ENCODE measurements at regions of chr4 and their contacts with region 1.

Region 1: GRCh38 chr4:27010334-27010940 is 149.8 kb downstream of the STIM2 start:
- DNase-seq: peak; percentile 77
- H3K4me3 ChIP-seq: no peak overlapping the region
- H3K27ac ChIP-seq: no peak overlapping the region
- H3K4me1 ChIP-seq: peaks cover 10% of the 10 kb centered on the region
- H3K27me3 ChIP-seq: no peaks in the 10 kb centered on the region
- CTCF ChIP-seq: peak; percentile 62 to 68
- POLR2A ChIP-seq: no peak

Region 2: DNA sequence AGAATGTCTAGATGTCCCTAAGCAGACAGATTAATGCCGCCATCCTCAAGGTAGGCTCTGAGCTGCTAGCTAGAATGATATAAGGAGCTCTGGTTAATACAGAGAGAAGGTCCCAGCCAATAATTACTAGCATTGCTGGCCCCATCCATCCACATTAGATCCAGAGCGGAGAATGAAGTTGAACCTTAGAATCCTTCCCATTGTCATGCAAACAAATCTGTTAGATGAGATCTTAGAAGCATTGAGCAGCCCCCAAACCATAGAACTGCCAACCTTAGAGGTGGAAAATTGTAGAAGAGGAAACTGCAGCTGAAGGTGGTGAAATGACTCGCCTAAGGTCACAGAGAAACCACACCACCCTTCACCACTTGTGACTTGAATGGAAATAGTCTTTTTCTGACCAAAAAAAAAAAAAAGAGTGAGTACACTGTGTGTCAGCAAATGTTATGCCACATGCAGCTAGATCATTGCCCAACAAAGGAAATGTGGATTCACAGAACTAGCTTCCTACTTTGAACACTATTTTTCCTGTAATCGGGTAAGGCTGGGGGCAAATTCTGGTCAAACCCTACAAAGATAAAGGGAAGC is 934.3 kb before region 1 on chr4:
- CTCF ChIA-PET with region 1: no interaction called
- POLR2A ChIA-PET with region 1: no interaction called
- dilution Hi-C with region 1: no loop called
- intact Hi-C with region 1: loop called (anchors 5 kb)
- DNase-seq: no peak
- H3K4me3 ChIP-seq: no peak overlapping the region
- H3K27ac ChIP-seq: no peak overlapping the region
- H3K4me1 ChIP-seq: no peaks in the 10 kb centered on the region
- H3K27me3 ChIP-seq: no peaks in the 10 kb centered on the region
- CTCF ChIP-seq: no peak
- POLR2A ChIP-seq: no peak

Region 3: DNA sequence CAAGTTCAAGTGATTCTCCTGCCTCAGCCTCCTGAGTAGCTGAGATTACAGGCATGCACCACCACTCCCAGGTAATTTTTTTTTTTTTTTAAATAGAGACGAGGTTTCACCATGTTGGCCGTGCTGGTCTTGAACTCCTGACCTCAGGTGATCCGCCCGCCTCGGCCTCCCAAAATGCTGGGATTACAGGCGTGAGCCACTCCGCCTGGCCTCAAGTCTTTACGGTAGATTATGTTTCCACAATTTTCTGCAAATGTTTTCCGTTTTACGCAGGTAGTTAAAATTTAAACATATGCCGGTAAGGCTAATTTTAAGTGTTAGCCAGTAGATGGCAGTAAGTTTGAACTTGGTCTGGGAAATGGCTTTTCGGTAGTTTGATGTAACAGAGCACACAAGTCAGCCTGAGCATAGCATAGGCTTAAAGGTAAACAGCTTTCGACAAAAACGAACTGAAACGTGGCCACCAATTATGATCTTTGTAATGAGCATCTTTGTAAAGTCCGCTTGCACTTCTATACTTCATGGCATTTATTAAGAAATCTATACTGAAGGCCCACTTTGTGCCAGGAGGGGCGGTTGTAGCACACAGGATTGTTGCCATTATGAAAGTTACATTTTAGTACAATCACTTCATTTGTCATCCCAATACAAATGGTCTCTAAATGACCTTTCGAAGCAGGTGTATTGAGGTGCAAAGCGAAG is 551.2 kb before region 1 on chr4:
- CTCF ChIA-PET with region 1: interaction called, 21 read pairs
- POLR2A ChIA-PET with region 1: no interaction called
- dilution Hi-C with region 1: no loop called
- intact Hi-C with region 1: loop called (anchors 1 kb)
- DNase-seq: peak; percentile 51
- H3K4me3 ChIP-seq: no peak overlapping the region
- H3K27ac ChIP-seq: no peak overlapping the region
- H3K4me1 ChIP-seq: no peaks in the 10 kb centered on the region
- H3K27me3 ChIP-seq: peaks cover 11% of the 10 kb centered on the region in 2 experiments
- CTCF ChIP-seq: peak; percentile 40 to 42
- POLR2A ChIP-seq: no peak

Region 4: DNA sequence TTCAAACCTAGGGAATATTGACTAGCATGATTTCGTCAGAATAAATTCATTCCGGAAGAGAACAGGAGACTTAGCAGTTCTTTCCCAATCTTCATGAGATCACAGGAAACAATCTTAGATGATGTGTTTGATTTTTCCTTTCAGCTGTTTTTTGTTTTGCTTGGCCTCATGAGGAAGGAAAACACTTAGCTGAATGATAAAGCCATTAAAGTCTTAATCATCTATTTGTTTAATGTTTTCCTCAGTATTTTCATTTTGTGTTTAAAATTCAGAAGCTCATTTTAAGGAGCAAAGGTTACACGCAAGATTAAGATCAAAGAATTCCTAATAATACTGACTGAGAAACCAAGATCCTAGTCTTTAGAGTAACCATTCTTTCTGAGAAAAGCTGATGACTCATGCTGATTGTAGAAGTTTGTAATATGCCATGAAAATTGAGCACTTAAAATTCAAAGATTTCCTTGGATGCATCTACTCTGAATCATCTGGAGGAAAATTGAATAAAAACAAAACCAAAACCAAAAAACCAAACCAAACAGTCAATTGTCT is 441.9 kb before region 1 on chr4:
- CTCF ChIA-PET with region 1: no interaction called
- POLR2A ChIA-PET with region 1: no interaction called
- dilution Hi-C with region 1: no loop called
- intact Hi-C with region 1: loop called (anchors 2 kb)
- DNase-seq: peak; percentile 77
- H3K4me3 ChIP-seq: no peak overlapping the region
- H3K27ac ChIP-seq: no peak overlapping the region
- H3K4me1 ChIP-seq: peaks cover 24% of the 10 kb centered on the region
- H3K27me3 ChIP-seq: peaks cover 10% of the 10 kb centered on the region in 2 experiments
- CTCF ChIP-seq: no peak
- POLR2A ChIP-seq: no peak

Region 5: DNA sequence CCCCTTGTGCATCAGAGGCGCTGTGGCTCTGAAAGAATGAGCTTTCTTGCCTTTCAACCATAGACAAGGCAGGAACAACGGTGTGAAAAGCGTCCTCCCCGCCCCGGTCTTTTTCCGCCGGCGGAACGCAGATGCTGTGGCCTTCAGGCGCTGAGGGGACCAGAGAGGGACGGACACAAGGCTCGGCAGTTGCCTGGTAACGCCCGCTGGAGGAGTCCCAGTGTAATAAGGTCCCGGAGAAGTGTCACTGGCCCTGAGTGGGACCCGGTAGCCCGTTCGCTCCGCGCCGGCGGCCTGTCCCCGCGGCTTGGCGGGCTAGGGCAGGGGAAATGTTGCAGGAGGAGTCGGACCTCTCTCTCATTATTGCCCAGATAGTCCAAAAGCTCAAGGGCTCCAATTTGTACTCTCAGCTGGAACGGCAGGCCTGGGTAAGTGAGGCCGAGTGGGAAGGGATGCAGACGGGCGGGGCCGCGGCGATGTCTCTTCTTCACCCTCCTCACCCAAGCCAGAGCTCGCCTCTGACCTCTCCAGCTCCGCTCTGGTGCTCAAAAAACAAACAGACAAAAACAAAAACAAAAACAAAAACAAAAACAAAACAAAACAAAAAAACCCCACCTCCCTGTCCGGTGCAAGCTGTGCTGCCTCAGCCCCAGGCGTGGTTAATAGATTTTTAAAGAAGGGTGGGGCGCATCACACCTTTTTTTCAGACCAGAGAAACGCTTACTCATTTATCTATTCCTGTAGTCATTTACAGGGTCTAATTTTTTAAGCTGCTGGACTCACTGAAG is 426.4 kb before region 1 on chr4 and contains the start of gene TBC1D19:
- CTCF ChIA-PET with region 1: interaction called, 3 read pairs
- POLR2A ChIA-PET with region 1: no interaction called
- dilution Hi-C with region 1: no loop called
- intact Hi-C with region 1: loop called (anchors 1 kb)
- DNase-seq: peak; percentile 85
- H3K4me3 ChIP-seq: peak within 1 kb of the TSS; percentile 52 to 90 (median 89)
- H3K27ac ChIP-seq: no peak within 1 kb of the TSS
- H3K4me1 ChIP-seq: peaks cover 10% of the 10 kb centered on the region
- H3K27me3 ChIP-seq: peaks cover 2 to 9% of the 10 kb centered on the region in 2 experiments
- CTCF ChIP-seq: no peak
- POLR2A ChIP-seq: peak; percentile 46
- total RNA-seq, gene TBC1D19: 5.9 and 6.1 TPM in 2 replicates

Region 6: DNA sequence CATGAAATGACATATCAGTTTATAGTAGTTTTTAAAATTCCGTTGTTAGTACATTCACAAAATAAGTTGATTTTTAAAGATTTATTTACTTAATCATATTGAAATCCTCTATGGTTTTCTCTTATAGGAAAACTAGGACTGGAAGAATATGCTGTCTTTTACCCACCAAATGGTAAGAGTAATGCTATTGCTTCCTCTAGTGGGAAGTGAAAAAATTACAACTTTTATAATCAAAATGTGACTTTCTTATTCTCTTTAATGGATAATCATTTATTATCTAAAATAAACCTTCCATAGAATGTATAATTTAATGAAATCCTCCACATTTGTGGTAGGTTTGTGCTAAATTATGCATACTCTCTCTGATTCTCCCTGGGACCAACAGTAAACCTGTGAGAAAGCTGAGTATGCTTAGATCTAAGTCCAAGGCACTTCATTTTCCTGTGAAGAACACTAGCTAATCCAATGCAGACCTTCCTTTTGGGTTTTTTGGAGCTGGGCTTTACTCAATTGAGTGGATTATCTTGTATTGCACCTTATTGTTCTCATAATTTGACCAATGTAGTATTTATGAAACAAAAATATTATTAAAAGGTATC is 290.4 kb before region 1 on chr4:
- CTCF ChIA-PET with region 1: interaction called, 20 read pairs
- POLR2A ChIA-PET with region 1: no interaction called
- dilution Hi-C with region 1: no loop called
- intact Hi-C with region 1: loop called (anchors 1 kb)
- DNase-seq: peak; percentile 45
- H3K4me3 ChIP-seq: no peak overlapping the region
- H3K27ac ChIP-seq: no peak overlapping the region
- H3K4me1 ChIP-seq: no peaks in the 10 kb centered on the region
- H3K27me3 ChIP-seq: no peaks in the 10 kb centered on the region
- CTCF ChIP-seq: peak in 1 of 2 donors; percentile 34
- POLR2A ChIP-seq: no peak

Region 7: DNA sequence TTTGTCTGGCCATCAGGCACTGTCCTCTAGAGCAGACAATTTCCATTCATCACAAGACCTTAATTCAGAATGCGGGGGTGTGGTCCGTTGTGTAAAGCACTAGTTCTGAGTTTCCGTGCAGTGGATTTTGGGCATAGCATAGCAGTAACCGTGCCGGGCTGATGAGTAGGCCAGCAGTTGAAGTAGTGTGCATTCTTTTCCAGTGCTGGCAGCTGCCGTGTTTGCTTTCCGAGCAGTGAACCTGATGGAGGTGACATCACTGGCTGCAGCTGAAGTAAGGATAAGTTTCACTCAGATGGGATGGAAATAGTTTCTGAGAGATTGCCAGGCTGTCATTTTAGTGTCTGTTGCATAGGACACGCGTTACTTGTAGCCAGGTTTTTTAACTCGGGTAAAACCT is 256.8 kb before region 1 on chr4:
- CTCF ChIA-PET with region 1: no interaction called
- POLR2A ChIA-PET with region 1: no interaction called
- dilution Hi-C with region 1: no loop called
- intact Hi-C with region 1: no loop called
- DNase-seq: no peak
- H3K4me3 ChIP-seq: no peak overlapping the region
- H3K27ac ChIP-seq: no peak overlapping the region
- H3K4me1 ChIP-seq: no peaks in the 10 kb centered on the region
- H3K27me3 ChIP-seq: no peaks in the 10 kb centered on the region
- CTCF ChIP-seq: no peak
- POLR2A ChIP-seq: no peak

Region 8: DNA sequence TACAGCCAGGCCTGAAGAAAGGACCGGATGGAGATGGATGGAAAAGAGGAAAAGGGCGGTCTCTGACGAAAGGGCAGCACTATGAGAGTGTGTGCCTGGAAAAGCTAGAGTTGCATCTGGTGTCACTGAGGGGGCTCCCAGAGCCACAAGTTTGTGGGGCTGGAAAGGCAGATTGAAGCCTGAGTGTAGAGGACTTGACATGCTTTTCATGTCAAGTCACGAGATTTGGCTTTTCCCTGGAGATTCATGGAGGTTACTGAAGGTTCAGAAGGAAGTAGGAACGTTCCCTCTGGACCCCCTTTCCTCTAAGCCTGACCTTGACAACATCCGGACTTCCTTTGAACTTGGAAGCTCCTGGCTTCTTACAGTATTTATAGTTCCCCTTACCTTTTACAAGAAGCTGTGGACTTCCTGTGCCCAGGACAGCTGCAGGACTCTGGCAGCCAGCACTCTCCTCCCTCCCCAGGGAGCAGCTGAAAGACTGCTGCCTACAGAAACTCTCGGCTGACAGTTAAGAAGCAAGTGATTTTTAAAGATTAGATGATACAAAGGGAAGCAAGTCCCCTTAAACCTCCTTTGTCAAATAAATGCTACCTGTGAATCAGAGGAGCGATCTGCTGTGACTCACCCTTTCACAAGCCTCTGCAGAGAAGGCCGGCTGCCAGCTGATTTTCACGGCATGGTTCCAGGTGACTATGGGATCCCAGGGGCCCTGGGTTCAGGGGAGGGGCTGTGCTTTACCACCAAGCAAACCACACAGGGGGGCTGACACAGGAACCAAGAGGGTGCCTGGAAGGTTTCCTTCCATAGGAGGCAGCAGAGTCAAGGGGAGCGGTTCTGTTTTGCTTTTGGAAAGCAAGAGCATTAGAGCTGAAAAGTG is 222.7 kb before region 1 on chr4:
- CTCF ChIA-PET with region 1: interaction called, 12 read pairs
- POLR2A ChIA-PET with region 1: no interaction called
- dilution Hi-C with region 1: no loop called
- intact Hi-C with region 1: loop called (anchors 1 kb)
- DNase-seq: peak; percentile 52
- H3K4me3 ChIP-seq: no peak overlapping the region
- H3K27ac ChIP-seq: peak overlapping the region; percentile 39
- H3K4me1 ChIP-seq: peaks cover 29% of the 10 kb centered on the region
- H3K27me3 ChIP-seq: no peaks in the 10 kb centered on the region
- CTCF ChIP-seq: peak; percentile 8 to 29
- POLR2A ChIP-seq: no peak

Region 9: GRCh38 chr4:26936284-26937065 is 74.0 kb before region 1 on chr4:
- CTCF ChIA-PET with region 1: no interaction called
- POLR2A ChIA-PET with region 1: no interaction called
- dilution Hi-C with region 1: no loop called
- intact Hi-C with region 1: no loop called
- DNase-seq: no peak
- H3K4me3 ChIP-seq: no peak overlapping the region
- H3K27ac ChIP-seq: no peak overlapping the region
- H3K4me1 ChIP-seq: no peaks in the 10 kb centered on the region
- H3K27me3 ChIP-seq: no peaks in the 10 kb centered on the region
- CTCF ChIP-seq: no peak
- POLR2A ChIP-seq: no peak

Region 10: GRCh38 chr4:27101561-27101960 is 91.1 kb after region 1 on chr4:
- CTCF ChIA-PET with region 1: no interaction called
- POLR2A ChIA-PET with region 1: no interaction called
- dilution Hi-C with region 1: no loop called
- intact Hi-C with region 1: no loop called
- DNase-seq: no peak
- H3K4me3 ChIP-seq: no peak overlapping the region
- H3K27ac ChIP-seq: no peak overlapping the region
- H3K4me1 ChIP-seq: no peaks in the 10 kb centered on the region
- H3K27me3 ChIP-seq: no peaks in the 10 kb centered on the region
- CTCF ChIP-seq: no peak
- POLR2A ChIP-seq: no peak